Calu3 (cell line): ENCODE measurements at regions of chr13 and their contacts with region 1.

Region 1: GRCh38 chr13:31930490-31930889 is 101.1 kb upstream of the FRY start:
- DNase-seq: no peak
- H3K4me3 Mint-ChIP-seq: no peak overlapping the region
- H3K27ac Mint-ChIP-seq: no peak overlapping the region
- H3K4me1 Mint-ChIP-seq: peaks cover 9% of the 10 kb centered on the region
- H3K27me3 Mint-ChIP-seq: no peaks in the 10 kb centered on the region
- CTCF ChIP-seq: no peak

Region 2: DNA sequence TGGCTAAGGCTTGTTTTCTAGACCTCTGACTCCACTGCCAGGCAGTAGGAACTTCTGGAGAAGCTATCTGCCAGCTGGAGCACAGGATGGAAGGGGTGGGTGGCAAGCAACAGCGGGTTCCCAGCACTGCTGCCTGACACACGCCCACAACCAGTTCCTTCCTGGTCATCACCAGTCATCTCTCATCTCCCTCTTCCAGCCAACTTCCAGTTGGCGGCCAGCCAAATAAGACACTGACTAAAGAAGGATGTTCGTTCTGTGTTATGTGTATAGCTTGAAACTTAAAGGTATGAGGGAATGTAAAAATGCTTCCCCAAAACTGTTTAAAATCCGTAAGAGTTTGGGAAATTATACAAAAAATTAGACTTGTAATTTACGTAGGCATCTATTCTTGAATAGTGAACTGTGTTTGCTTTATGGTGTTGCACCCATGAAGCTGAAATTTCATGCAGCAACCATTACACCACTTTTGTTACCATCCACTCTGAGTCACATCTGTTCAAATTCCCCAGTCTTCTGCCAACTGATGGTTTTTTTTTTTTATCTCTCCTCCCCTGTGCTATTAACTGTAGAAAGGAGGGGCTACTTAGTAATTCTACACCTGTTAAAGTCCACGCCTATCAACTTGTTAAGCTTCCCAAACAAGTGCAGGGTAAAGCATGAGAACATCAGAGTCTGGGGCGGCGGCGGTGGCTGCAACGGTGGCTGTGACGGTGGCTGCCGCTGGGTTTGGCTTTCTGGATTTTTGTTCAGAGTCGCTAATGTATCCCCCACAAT is 14.9 kb after region 1 on chr13:
- CTCF ChIA-PET with region 1: interaction called, 13 read pairs
- intact Hi-C with region 1: no loop called
- DNase-seq: peak; percentile 46
- H3K4me3 Mint-ChIP-seq: peak overlapping the region; percentile 78
- H3K27ac Mint-ChIP-seq: peak overlapping the region; percentile 51
- H3K4me1 Mint-ChIP-seq: peaks cover 51% of the 10 kb centered on the region
- H3K27me3 Mint-ChIP-seq: no peaks in the 10 kb centered on the region
- CTCF ChIP-seq: no peak

Region 3: DNA sequence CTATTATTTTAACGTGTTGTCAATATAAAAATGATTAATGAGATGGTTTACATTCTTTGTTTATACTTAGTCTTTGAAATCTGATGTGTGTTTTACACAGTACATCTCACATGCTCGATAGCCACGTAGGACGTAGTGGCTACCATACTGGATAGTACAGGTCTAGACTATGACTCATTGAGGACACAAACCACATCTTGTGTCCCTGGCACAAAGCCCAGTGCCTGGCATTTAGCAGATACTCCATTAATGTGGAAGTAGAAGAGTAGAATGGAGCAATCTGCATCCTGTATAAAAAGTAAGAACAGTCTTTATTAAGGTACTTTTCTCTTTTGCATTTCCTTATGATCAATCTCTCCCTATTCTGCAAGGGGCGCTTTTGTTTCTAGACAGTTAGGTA is 52.0 kb after region 1 on chr13:
- CTCF ChIA-PET with region 1: no interaction called
- intact Hi-C with region 1: loop called (anchors 5 kb)
- DNase-seq: peak; percentile 83
- H3K4me3 Mint-ChIP-seq: peak overlapping the region; percentile 9
- H3K27ac Mint-ChIP-seq: peak overlapping the region; percentile 71
- H3K4me1 Mint-ChIP-seq: peaks cover 19% of the 10 kb centered on the region
- H3K27me3 Mint-ChIP-seq: no peaks in the 10 kb centered on the region
- CTCF ChIP-seq: no peak